A549 (cell line): ENCODE measurements at regions of chr3 and their contacts with region 1.

Region 1: DNA sequence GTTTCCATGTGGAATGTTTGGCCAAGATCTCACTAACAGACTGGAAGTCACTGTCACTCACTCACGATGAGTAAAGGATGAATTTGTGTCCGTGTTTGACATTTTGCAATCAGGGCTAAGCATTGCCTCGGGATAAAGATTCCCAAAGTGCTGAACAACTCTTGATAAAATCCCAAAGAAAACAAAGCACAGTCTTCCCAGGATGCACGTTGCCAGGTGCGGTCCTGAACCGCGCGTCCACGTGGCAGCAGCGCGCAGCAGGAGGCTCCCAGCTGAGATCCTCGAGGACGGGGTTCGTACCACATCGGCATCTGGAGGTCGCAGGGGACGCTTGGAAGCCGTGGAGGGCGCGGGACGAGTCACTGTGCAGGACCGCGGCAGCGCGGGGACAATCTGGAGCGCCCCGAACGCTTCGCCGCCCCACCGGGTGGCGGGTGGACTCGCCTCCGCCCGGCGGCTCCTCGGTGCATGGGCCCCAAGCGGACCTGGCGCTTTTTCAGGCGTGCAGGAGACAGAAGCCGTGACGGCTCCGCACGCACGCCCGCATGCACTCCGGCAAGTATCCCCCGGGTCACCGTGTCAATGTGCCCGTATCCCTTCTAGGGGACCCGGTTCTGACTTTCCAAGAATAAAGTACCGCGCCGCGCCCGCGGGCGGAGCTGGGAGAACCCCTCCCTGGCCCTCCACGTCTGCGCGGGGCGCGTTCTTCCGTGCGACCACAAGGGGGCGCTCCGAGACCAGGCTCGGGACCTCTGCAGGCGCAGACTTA is 17.7 kb downstream of the CPN2 start:
- DNase-seq: peak; percentile 47 to 82
- ATAC-seq: peak; percentile 87 to 97
- H3K4me3 ChIP-seq: peak overlapping the region; percentile 45
- H3K27ac ChIP-seq: peak overlapping the region; percentile 69 to 93
- H3K4me1 ChIP-seq: peaks cover 25% of the 10 kb centered on the region
- CTCF ChIP-seq: peak; percentile 86
- EP300 ChIP-seq: no peak
- POLR2A ChIP-seq: no peak; the same call in 1 of the 2 replicates
- RAD21 ChIP-seq: peak; percentile 90 to 95

Region 2: GRCh38 chr3:194308601-194309449 is 24.6 kb before region 1 on chr3:
- CTCF ChIA-PET with region 1: no interaction called
- POLR2A ChIA-PET with region 1: no interaction called
- DNase-seq: no peak
- ATAC-seq: no peak
- H3K4me3 ChIP-seq: no peak overlapping the region
- H3K27ac ChIP-seq: peak overlapping the region in 1 of 2 experiments; percentile 39; a peak in 3 of 6 replicates
- H3K4me1 ChIP-seq: peaks cover 33% of the 10 kb centered on the region
- CTCF ChIP-seq: no peak
- EP300 ChIP-seq: no peak
- POLR2A ChIP-seq: no peak
- RAD21 ChIP-seq: no peak

Region 3: GRCh38 chr3:194404365-194405140 is 71.2 kb after region 1 on chr3:
- CTCF ChIA-PET with region 1: interaction called, 12 read pairs
- POLR2A ChIA-PET with region 1: no interaction called
- DNase-seq: peak in 1 of 2 experiments; percentile 56
- ATAC-seq: peak in 1 of 2 experiments; percentile 51; a peak in 1 of 6 replicates
- H3K4me3 ChIP-seq: no peak overlapping the region
- H3K27ac ChIP-seq: no peak overlapping the region
- H3K4me1 ChIP-seq: peaks cover 3% of the 10 kb centered on the region; the same call in 1 of the 3 replicates
- CTCF ChIP-seq: peak; percentile 74
- EP300 ChIP-seq: no peak
- POLR2A ChIP-seq: no peak
- RAD21 ChIP-seq: peak; percentile 59 to 62